ENCODE measurements at regions of chr13 and their contacts with region 1.

Region 1: GRCh38 chr13:112638157-112638750 is 50.3 kb upstream of the TUBGCP3 start:
- DNase-seq: no peak
- H3K4me3 ChIP-seq: no peak overlapping the region
- H3K27ac ChIP-seq: no peak overlapping the region
- H3K4me1 ChIP-seq: no peaks in the 10 kb centered on the region
- H3K27me3 ChIP-seq: peaks cover 47% of the 10 kb centered on the region
- CTCF ChIP-seq: no peak

Region 2: DNA sequence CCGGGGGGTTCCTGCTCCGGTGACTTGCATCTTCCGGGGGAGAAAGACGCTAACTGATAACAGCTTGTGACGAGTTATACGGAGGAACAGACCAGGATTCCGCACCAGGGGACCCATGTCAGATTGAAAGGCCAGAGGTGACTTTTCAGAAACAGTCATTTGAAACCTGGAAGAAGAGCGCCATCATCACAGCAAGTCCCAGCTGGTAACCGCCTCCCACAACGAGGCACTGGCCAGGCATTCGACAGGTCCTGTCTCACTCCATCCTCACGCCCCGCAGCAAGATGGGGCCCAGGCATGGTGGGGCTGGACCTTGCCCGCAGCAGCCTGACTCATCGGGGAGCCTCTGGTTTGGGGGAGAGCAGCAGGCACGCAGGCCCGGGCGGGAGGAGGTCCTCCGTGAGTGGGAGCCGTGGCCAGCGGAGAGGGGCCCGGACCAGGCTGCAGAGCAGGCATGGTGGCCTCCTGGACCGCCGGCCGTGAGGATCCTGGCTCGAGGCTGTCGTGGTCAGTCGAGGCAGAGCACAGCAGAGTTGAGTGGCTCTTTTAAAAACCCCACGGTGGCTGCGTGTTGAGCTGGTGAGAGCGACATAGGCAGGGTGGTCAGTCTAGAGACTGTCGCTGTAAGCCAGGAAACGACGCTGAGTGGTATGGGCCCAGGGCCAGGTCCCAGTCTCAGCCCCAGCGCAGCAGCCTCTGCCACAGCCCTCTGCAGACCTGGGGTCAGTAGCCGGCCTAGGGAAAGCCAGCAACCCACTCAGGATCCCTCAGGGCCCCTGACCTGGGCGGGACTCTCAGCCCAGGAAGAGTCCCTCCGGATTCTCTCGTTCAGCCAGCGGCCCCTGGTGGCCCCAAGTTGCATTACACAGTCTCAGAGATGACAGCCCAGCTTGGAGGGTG is 235.8 kb after region 1 on chr13:
- CTCF ChIA-PET with region 1: interaction called, 7 read pairs
- POLR2A ChIA-PET with region 1: no interaction called
- intact Hi-C with region 1: loop called (anchors 1 kb)
- DNase-seq: peak; percentile 73
- H3K4me3 ChIP-seq: no peak overlapping the region
- H3K27ac ChIP-seq: no peak overlapping the region
- H3K4me1 ChIP-seq: no peaks in the 10 kb centered on the region
- H3K27me3 ChIP-seq: no peaks in the 10 kb centered on the region
- CTCF ChIP-seq: peak; percentile 88

Measured in A673 (cell line).